CD8-positive, alpha-beta T cell (primary cell): ENCODE measurements at regions of chr6 and their contacts with region 1.

Region 1: GRCh38 chr6:16761471-16762267 is 409 bp upstream of the ATXN1 start:
- DNase-seq: peak; percentile 72 to 93 (median 83)
- ATAC-seq: peak; percentile 56
- H3K4me3 ChIP-seq: peak overlapping the region; percentile 76 to 79
- H3K4me3 Mint-ChIP-seq: peak overlapping the region; percentile 97
- H3K27ac ChIP-seq: peak overlapping the region; percentile 93 to 96
- H3K27ac Mint-ChIP-seq: peak overlapping the region; percentile 99
- H3K4me1 ChIP-seq: peaks cover 30% of the 10 kb centered on the region
- H3K4me1 Mint-ChIP-seq: peaks cover 61% of the 10 kb centered on the region
- H3K27me3 ChIP-seq: no peaks in the 10 kb centered on the region
- H3K27me3 Mint-ChIP-seq: no peaks in the 10 kb centered on the region
- CTCF ChIP-seq: no peak

Region 2: GRCh38 chr6:16128759-16129622 is 632.7 kb before region 1 on chr6 and contains the start of gene MYLIP:
- CTCF ChIA-PET with region 1: interaction called, 3 read pairs
- POLR2A ChIA-PET with region 1: no interaction called
- intact Hi-C with region 1: loop called (anchors 1 to 5 kb)
- DNase-seq: peak; percentile 96 to 99 (median 97)
- ATAC-seq: peak; percentile 81
- H3K4me3 ChIP-seq: peak within 1 kb of the TSS; percentile 75 to 96
- H3K4me3 Mint-ChIP-seq: peak within 1 kb of the TSS; percentile 96
- H3K27ac ChIP-seq: peak within 1 kb of the TSS; percentile 90 to 94
- H3K27ac Mint-ChIP-seq: peak within 1 kb of the TSS; percentile 96
- H3K4me1 ChIP-seq: peaks cover 29% of the 10 kb centered on the region
- H3K4me1 Mint-ChIP-seq: peaks cover 33% of the 10 kb centered on the region
- H3K27me3 ChIP-seq: peaks cover 0 to 2% of the 10 kb centered on the region in 2 experiments
- H3K27me3 Mint-ChIP-seq: no peaks in the 10 kb centered on the region
- CTCF ChIP-seq: peak; percentile 61
- total RNA-seq, gene MYLIP: 225 to 231 TPM

Region 3: DNA sequence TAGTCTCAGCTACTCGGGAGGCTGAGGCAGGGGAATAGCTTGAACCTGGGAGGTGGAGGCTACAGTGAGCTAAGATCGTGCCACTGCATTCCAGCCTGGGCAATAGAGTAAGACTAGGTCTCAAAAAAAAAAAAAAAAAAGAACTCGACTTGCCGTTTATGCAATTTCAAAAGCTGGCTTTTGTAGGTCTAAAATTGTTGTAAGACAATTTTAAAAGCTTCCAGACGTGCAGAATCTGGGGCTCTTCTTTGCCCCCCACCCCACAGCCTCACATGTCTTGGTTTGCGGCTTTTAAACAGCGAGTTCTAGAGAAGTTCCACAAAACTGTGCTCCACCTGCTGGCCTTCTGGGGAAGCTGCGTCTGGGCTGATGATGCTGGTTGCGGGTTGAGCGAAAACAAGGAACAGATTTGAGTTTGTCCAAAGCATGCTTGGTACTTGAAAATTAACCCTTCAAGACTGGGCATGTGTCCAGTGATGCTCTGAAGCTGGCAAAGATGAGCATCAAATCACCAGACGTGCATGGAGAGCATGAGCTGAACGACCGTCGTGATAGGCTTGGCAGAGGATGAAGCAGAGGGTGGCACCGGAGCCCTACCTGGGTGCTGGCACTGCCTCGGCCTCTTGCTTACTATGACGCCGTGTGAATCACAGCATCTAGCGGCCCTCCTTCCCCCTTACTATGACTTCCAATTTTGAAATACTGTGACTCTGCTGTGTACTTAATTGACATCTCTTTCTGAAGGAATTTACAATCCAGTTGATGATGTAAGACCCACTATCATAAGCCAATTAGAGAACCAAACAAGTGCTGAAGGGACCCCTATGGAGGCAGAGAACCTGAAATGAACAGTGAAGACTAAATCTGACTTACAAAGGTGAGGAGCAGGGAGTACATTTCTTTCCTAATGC is 351.9 kb before region 1 on chr6:
- CTCF ChIA-PET with region 1: interaction called, 3 read pairs
- POLR2A ChIA-PET with region 1: interaction called, 4 read pairs
- intact Hi-C with region 1: loop called in 1 of 2 experiments (anchors 5 kb)
- DNase-seq: peak; percentile 8 to 76 (median 60)
- ATAC-seq: peak; percentile 67
- H3K4me3 ChIP-seq: no peak overlapping the region
- H3K4me3 Mint-ChIP-seq: no peak overlapping the region
- H3K27ac ChIP-seq: no peak overlapping the region
- H3K27ac Mint-ChIP-seq: peak overlapping the region; percentile 7
- H3K4me1 ChIP-seq: no peaks in the 10 kb centered on the region
- H3K4me1 Mint-ChIP-seq: peaks cover 26% of the 10 kb centered on the region
- H3K27me3 ChIP-seq: no peaks in the 10 kb centered on the region
- H3K27me3 Mint-ChIP-seq: no peaks in the 10 kb centered on the region
- CTCF ChIP-seq: peak; percentile 66

Region 4: GRCh38 chr6:16651871-16652270 is 109.8 kb before region 1 on chr6:
- CTCF ChIA-PET with region 1: interaction called, 3 read pairs
- POLR2A ChIA-PET with region 1: interaction called, 6 read pairs
- intact Hi-C with region 1: loop called (anchors 5 kb)
- DNase-seq: peak in 2 of 9 experiments; percentile 60 to 77
- ATAC-seq: peak; percentile 79
- H3K4me3 ChIP-seq: no peak overlapping the region
- H3K4me3 Mint-ChIP-seq: peak overlapping the region; percentile 15
- H3K27ac ChIP-seq: peak overlapping the region in 1 of 2 experiments; percentile 38
- H3K27ac Mint-ChIP-seq: peak overlapping the region; percentile 80
- H3K4me1 ChIP-seq: peaks cover 14% of the 10 kb centered on the region
- H3K4me1 Mint-ChIP-seq: peaks cover 43% of the 10 kb centered on the region
- H3K27me3 ChIP-seq: no peaks in the 10 kb centered on the region
- H3K27me3 Mint-ChIP-seq: no peaks in the 10 kb centered on the region
- CTCF ChIP-seq: no peak

Region 5: DNA sequence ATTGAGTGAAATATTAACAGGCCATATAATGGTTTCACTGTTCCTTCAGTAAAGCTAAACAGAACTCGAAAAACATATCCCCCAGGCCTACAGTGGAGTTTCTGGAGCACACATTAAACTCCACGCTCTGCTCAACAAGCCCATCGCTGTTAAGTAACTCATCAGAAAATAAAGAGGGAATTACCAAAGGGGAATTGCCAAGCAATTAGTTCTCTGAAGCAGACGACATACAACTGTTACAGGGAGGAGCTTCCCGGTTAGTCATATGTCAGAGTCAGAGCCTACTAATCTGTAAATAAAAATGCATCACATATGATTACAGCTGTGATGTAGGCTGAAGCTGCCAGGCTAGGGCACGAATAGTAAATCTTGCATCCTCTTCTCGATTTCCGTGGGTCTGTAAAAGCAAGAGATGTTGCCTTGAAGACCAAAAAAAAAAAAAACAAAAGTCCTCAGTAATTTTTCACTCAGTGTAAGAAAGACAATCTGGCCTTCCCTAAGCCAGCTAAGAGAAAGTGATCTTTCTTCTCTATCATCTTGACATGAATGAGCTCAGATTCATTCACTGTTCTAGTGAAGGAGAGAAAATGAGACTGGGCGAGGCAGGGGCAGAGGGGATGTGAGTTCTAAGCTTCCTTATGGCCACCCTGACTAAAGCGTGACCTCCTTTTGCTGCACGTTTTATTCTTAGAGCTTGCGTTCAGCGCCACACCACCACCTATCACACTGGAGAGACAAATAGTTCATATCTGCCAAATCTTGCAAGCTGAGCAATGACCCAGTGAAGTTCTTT is 14.2 kb before region 1 on chr6:
- CTCF ChIA-PET with region 1: interaction called, 10 read pairs
- POLR2A ChIA-PET with region 1: interaction called, 4 read pairs
- intact Hi-C with region 1: loop called in 1 of 2 experiments (anchors 1 kb)
- DNase-seq: peak in 1 of 9 experiments; percentile 39
- ATAC-seq: peak; percentile 44
- H3K4me3 ChIP-seq: no peak overlapping the region
- H3K4me3 Mint-ChIP-seq: no peak overlapping the region
- H3K27ac ChIP-seq: no peak overlapping the region
- H3K27ac Mint-ChIP-seq: peak overlapping the region; percentile 73
- H3K4me1 ChIP-seq: no peaks in the 10 kb centered on the region
- H3K4me1 Mint-ChIP-seq: peaks cover 72% of the 10 kb centered on the region
- H3K27me3 ChIP-seq: no peaks in the 10 kb centered on the region
- H3K27me3 Mint-ChIP-seq: no peaks in the 10 kb centered on the region
- CTCF ChIP-seq: no peak

Region 6: GRCh38 chr6:17250237-17250636 is 488.6 kb after region 1 on chr6:
- CTCF ChIA-PET with region 1: no interaction called
- POLR2A ChIA-PET with region 1: no interaction called
- intact Hi-C with region 1: no loop called
- DNase-seq: no peak
- ATAC-seq: no peak
- H3K4me3 ChIP-seq: no peak overlapping the region
- H3K4me3 Mint-ChIP-seq: no peak overlapping the region
- H3K27ac ChIP-seq: no peak overlapping the region
- H3K27ac Mint-ChIP-seq: no peak overlapping the region
- H3K4me1 ChIP-seq: no peaks in the 10 kb centered on the region
- H3K4me1 Mint-ChIP-seq: no peaks in the 10 kb centered on the region
- H3K27me3 ChIP-seq: no peaks in the 10 kb centered on the region
- H3K27me3 Mint-ChIP-seq: peaks cover 20% of the 10 kb centered on the region
- CTCF ChIP-seq: no peak

Region 7: GRCh38 chr6:17599885-17600526 is 838.3 kb after region 1 on chr6 and contains the start of gene FAM8A1:
- CTCF ChIA-PET with region 1: no interaction called
- POLR2A ChIA-PET with region 1: no interaction called
- intact Hi-C with region 1: loop called (anchors 5 to 10 kb)
- DNase-seq: peak; percentile 90 to 99 (median 96)
- ATAC-seq: peak; percentile 86
- H3K4me3 ChIP-seq: peak within 1 kb of the TSS; percentile 62 to 78
- H3K4me3 Mint-ChIP-seq: peak within 1 kb of the TSS; percentile 88
- H3K27ac ChIP-seq: peak within 1 kb of the TSS; percentile 82 to 91
- H3K27ac Mint-ChIP-seq: peak within 1 kb of the TSS; percentile 94
- H3K4me1 ChIP-seq: peaks cover 32% of the 10 kb centered on the region
- H3K4me1 Mint-ChIP-seq: peaks cover 46% of the 10 kb centered on the region
- H3K27me3 ChIP-seq: no peaks in the 10 kb centered on the region
- H3K27me3 Mint-ChIP-seq: no peaks in the 10 kb centered on the region
- CTCF ChIP-seq: peak; percentile 41
- total RNA-seq, gene FAM8A1: 17.6 to 17.8 TPM

Region 8: GRCh38 chr6:18264219-18264922 is 1502.7 kb after region 1 on chr6 and contains the start of gene DEK:
- CTCF ChIA-PET with region 1: no interaction called
- POLR2A ChIA-PET with region 1: no interaction called
- intact Hi-C with region 1: loop called in 1 of 2 experiments (anchors 10 kb)
- DNase-seq: peak; percentile 59 to 90 (median 84)
- ATAC-seq: peak; percentile 66
- H3K4me3 ChIP-seq: peak within 1 kb of the TSS; percentile 67 to 79
- H3K4me3 Mint-ChIP-seq: peak within 1 kb of the TSS; percentile 90
- H3K27ac ChIP-seq: peak within 1 kb of the TSS; percentile 53 to 89
- H3K27ac Mint-ChIP-seq: peak within 1 kb of the TSS; percentile 95
- H3K4me1 ChIP-seq: peaks cover 33% of the 10 kb centered on the region
- H3K4me1 Mint-ChIP-seq: peaks cover 52% of the 10 kb centered on the region
- H3K27me3 ChIP-seq: no peaks in the 10 kb centered on the region
- H3K27me3 Mint-ChIP-seq: no peaks in the 10 kb centered on the region
- CTCF ChIP-seq: peak; percentile 45
- total RNA-seq, gene DEK: 39.5 to 47.5 TPM